Activated CD4-positive, alpha-beta T cell treated with anti-CD3 and anti-CD28 coated beads, Interleukin-2, amount 10 ng/mL, durations not matched to agents 24 days and 14 days (primary cell): ENCODE measurements at regions of chr2 and their contacts with region 1.

Region 1: GRCh38 chr2:200525882-200526651 is at the start of gene SGO2:
- DNase-seq: peak; percentile 99
- H3K4me3 Mint-ChIP-seq: peak within 1 kb of the TSS; percentile 94
- H3K27ac Mint-ChIP-seq: peak within 1 kb of the TSS; percentile 92
- H3K4me1 Mint-ChIP-seq: peaks cover 36% of the 10 kb centered on the region
- H3K27me3 Mint-ChIP-seq: no peaks in the 10 kb centered on the region
- total RNA-seq, gene SGO2: 25.7 and 27.2 TPM in 2 replicates

Region 2: DNA sequence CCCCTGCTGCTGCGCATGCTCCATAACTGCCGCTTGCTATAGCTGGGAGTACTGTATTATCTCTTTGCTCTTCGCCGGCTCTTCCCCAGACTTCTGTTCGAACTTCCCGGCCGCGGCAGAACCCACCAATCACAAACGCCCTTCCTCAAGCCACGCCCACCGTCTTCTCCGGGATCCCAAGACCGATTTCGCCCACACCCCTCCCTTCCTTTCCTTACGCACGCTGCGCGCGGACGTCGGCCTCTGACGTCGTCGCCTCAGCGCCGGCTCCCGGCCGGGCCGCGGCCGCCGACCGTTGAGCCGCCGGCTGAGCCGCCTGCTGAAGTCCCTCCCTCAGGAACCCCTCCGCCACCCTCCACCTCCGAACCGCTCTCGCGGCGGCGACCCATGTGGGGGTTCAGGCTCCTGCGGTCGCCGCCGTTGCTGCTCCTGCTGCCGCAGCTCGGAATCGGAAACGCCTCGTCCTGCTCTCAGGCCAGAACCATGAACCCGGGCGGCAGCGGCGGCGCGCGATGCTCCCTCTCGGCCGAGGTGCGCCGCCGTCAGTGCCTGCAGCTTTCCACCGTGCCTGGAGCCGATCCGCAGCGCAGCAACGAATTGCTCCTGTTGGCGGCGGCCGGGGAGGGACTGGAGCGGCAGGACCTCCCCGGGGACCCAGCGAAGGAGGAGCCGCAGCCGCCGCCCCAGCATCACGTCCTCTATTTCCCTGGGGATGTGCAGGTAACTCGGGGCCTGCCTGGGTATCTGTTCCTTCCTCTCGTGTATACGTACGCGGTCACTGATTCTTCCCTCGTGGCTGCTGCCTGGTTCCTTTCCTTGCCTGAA is 614.8 kb before region 1 on chr2 and contains the start of gene C2orf69:
- intact Hi-C with region 1: loop called (anchors 1 kb)
- DNase-seq: peak; percentile 97
- H3K4me3 Mint-ChIP-seq: peak within 1 kb of the TSS; percentile 99
- H3K27ac Mint-ChIP-seq: peak within 1 kb of the TSS; percentile 97
- H3K4me1 Mint-ChIP-seq: peaks cover 31% of the 10 kb centered on the region
- H3K27me3 Mint-ChIP-seq: peaks cover 6% of the 10 kb centered on the region
- total RNA-seq, gene C2orf69: 17.1 and 17.4 TPM in 2 replicates

Region 3: GRCh38 chr2:200405599-200406298 is 120.3 kb before region 1 on chr2:
- intact Hi-C with region 1: loop called (anchors 5 kb)
- DNase-seq: no peak
- H3K4me3 Mint-ChIP-seq: peak overlapping the region; percentile 38
- H3K27ac Mint-ChIP-seq: peak overlapping the region; percentile 68
- H3K4me1 Mint-ChIP-seq: peaks cover 47% of the 10 kb centered on the region
- H3K27me3 Mint-ChIP-seq: no peaks in the 10 kb centered on the region

Region 4: GRCh38 chr2:200578778-200579177 is 52.7 kb after region 1 on chr2:
- intact Hi-C with region 1: loop called (anchors 5 kb)
- DNase-seq: no peak
- H3K4me3 Mint-ChIP-seq: no peak overlapping the region
- H3K27ac Mint-ChIP-seq: peak overlapping the region; percentile 3
- H3K4me1 Mint-ChIP-seq: peaks cover 16% of the 10 kb centered on the region
- H3K27me3 Mint-ChIP-seq: no peaks in the 10 kb centered on the region

Region 5: GRCh38 chr2:200864176-200864976 is 338.3 kb after region 1 on chr2 and contains the start of gene CLK1:
- intact Hi-C with region 1: loop called (anchors 5 kb)
- DNase-seq: peak; percentile 99
- H3K4me3 Mint-ChIP-seq: peak within 1 kb of the TSS; percentile 91
- H3K27ac Mint-ChIP-seq: peak within 1 kb of the TSS; percentile 94
- H3K4me1 Mint-ChIP-seq: peaks cover 32% of the 10 kb centered on the region
- H3K27me3 Mint-ChIP-seq: no peaks in the 10 kb centered on the region
- total RNA-seq, gene CLK1: 99.3 and 100 TPM in 2 replicates